ENCODE measurements at regions of chrX and their contacts with region 1.

Region 1: DNA sequence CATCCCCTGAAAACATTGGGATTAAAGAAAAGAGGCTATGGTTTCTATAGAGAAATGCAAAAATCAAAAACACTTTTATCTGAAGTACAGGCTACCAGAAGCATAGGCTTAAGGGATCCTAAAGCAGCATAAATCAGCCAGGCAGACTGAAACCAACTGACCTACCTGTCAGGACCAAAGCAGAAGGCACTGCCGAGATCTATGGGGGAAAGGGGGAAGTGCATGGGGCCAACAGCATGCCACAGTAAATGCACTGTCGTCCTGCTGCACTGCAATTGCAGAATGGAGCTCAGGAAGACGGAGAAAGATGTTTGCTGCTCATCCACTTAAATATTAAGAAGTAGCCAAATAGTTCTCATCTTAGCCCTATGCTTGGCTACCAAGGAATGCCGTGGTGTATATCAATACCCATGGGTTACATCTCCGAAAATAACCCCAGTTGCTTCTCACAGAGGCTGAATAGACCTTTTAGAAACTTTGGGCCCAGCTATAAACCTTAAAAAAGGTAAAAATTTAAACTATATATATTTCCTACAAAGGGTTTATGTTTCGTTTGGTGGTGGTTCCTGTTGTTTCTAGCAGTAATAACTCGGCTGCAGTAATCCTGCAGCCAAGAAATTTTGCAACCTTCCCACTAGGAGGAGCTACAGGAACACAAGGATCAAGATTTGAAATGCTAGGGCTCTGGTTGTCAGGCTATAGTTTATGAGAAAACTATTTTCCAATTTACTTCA is 312.2 kb upstream of the DIAPH2 start:
- DNase-seq: peak; percentile 27
- ATAC-seq: peak; percentile 62
- H3K4me3 ChIP-seq: no peak overlapping the region
- H3K27ac ChIP-seq: no peak overlapping the region
- H3K4me1 ChIP-seq: no peaks in the 10 kb centered on the region
- H3K27me3 ChIP-seq: no peaks in the 10 kb centered on the region
- CTCF ChIP-seq: peak; percentile 56
- EP300 ChIP-seq: no peak
- POLR2A ChIP-seq: no peak
- RAD21 ChIP-seq: no peak

Region 2: GRCh38 chrX:96576368-96576767 is 203.9 kb after region 1 on chrX:
- CTCF ChIA-PET with region 1: no interaction called
- POLR2A ChIA-PET with region 1: no interaction called
- in situ Hi-C with region 1: no loop called
- intact Hi-C with region 1: loop called (anchors 2 kb)
- DNase-seq: no peak
- ATAC-seq: no peak
- H3K4me3 ChIP-seq: no peak overlapping the region
- H3K27ac ChIP-seq: no peak overlapping the region
- H3K4me1 ChIP-seq: no peaks in the 10 kb centered on the region
- H3K27me3 ChIP-seq: no peaks in the 10 kb centered on the region
- CTCF ChIP-seq: no peak
- EP300 ChIP-seq: no peak
- POLR2A ChIP-seq: no peak
- RAD21 ChIP-seq: no peak